MCF 10A (cell line): ENCODE measurements at regions of chr6 and their contacts with region 1.

Region 1: GRCh38 chr6:68958327-68958726 is 323.2 kb downstream of the ADGRB3 start:
- DNase-seq: peak; percentile 7
- H3K4me3 Mint-ChIP-seq: no peak overlapping the region
- H3K27ac Mint-ChIP-seq: no peak overlapping the region
- H3K4me1 Mint-ChIP-seq: no peaks in the 10 kb centered on the region
- H3K27me3 Mint-ChIP-seq: peaks cover 77% of the 10 kb centered on the region
- CTCF ChIP-seq: peak; percentile 28

Region 2: DNA sequence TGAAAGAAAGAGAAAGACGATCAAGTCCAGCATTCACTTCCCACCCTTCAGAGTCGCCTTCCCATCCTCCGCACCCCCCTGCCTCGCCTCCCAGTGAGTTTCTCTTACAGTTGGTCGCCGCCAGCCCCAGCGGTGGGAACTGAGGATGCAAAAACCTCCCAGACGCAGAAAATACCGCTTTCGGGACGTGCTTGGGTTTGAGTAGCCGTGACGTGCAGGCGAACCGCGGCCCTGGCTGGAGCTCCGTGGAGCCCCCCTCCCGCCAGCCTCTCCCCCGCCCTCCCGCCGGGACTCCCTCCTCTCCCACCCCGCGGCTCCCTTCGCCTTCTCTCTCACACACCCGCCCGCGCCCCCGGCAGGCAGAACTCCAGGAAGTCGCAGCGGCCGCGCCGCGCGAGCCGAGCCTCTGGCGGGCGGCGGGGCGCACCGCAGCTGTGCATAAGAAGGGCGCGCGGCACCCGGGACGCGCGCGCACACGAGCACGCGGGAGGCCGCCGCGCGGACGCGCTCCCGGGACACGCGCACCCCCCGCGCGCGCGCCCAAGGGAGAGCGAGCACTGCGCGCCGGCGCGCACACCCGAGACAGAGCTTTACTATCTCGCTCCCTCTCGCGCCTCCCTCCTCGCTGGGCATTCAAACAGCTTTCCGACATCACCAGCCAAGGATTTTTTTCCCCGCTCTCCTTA is 323.5 kb before region 1 on chr6 and contains the start of gene ADGRB3:
- CTCF ChIA-PET with region 1: interaction called, 4 read pairs
- POLR2A ChIA-PET with region 1: interaction called, 3 read pairs
- intact Hi-C with region 1: loop called (anchors 1 kb)
- DNase-seq: no peak
- H3K4me3 Mint-ChIP-seq: peak within 1 kb of the TSS; percentile 69
- H3K27ac Mint-ChIP-seq: no peak within 1 kb of the TSS
- H3K4me1 Mint-ChIP-seq: peaks cover 6% of the 10 kb centered on the region
- H3K27me3 Mint-ChIP-seq: peaks cover 95% of the 10 kb centered on the region
- CTCF ChIP-seq: no peak
- total RNA-seq, gene ADGRB3: not detected in 2 replicates

Region 3: GRCh38 chr6:68876792-68877493 is 81.4 kb before region 1 on chr6:
- CTCF ChIA-PET with region 1: interaction called, 3 read pairs
- POLR2A ChIA-PET with region 1: no interaction called
- intact Hi-C with region 1: loop called (anchors 1 kb)
- DNase-seq: peak; percentile 22
- H3K4me3 Mint-ChIP-seq: no peak overlapping the region
- H3K27ac Mint-ChIP-seq: no peak overlapping the region
- H3K4me1 Mint-ChIP-seq: no peaks in the 10 kb centered on the region
- H3K27me3 Mint-ChIP-seq: peaks cover 69% of the 10 kb centered on the region
- CTCF ChIP-seq: peak; percentile 36